AG04449 (cell line): ENCODE measurements at regions of chr12 and their contacts with region 1.

Region 1: DNA sequence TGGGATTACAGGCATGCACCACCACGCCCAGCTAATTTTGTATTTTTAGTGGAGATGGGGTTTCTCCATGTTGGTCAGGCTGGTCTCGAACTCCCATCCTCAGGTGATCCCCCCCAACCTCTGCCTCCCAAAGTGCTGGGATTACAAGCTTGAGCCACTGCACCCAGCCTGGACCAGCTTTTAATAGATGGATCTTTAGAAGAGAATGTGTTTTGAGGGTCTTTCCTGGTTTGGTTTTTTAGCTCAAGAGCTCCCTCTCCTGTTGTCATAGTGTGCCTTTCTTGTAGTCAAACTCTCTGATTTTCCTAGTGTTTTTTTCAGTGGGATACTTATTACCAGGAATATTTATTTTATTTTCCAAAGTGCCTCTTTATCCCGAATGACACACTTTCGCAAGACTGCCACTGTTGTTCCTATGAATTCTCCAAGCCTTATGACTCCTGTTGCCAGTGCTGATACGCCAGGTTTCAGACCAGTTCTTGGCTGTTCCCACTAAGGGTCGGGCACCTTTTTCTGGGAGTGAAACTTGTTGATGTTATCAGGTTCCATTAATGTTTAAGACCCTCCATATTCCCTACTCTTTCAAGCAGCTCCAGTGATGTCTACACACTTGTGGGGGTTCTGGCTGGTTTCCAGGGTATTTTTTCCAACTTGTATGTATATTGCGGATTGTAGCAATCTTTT is 31.5 kb upstream of the LIMA1 start:
- DNase-seq: no peak
- H3K4me3 ChIP-seq: no peak overlapping the region
- CTCF ChIP-seq: peak; percentile 49

Region 2: GRCh38 chr12:50111693-50112455 is 202.9 kb before region 1 on chr12 and contains the start of gene COX14:
- CTCF ChIA-PET with region 1: interaction called, 22 read pairs
- POLR2A ChIA-PET with region 1: no interaction called
- DNase-seq: peak; percentile 97
- H3K4me3 ChIP-seq: peak within 1 kb of the TSS; percentile 98
- CTCF ChIP-seq: peak; percentile 96

Region 3: GRCh38 chr12:50174971-50175715 is 139.6 kb before region 1 on chr12:
- CTCF ChIA-PET with region 1: interaction called, 50 read pairs
- POLR2A ChIA-PET with region 1: no interaction called
- DNase-seq: no peak
- H3K4me3 ChIP-seq: no peak overlapping the region
- CTCF ChIP-seq: peak; percentile 2

Region 4: DNA sequence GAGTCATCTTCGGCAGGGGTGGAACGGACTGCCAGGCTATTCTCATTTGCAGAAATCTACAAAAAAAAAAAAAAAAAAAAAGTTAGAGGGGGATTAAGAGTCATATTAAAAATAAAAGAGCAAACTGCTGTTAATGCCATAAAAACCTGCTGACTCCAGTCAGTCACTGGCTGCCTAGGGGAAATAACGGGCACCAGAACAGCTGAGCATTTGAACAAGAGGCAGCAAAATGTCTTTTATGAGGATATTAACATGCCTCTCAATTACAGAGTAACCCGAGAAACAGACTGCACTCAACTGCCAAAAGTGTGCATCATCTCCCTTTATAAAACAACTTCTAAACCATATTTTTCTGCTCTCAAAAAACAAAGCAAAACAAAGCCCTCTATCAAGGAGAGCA is 118.9 kb before region 1 on chr12:
- CTCF ChIA-PET with region 1: interaction called, 15 read pairs
- POLR2A ChIA-PET with region 1: no interaction called
- DNase-seq: no peak
- H3K4me3 ChIP-seq: no peak overlapping the region
- CTCF ChIP-seq: no peak

Region 5: GRCh38 chr12:50222275-50222795 is 92.4 kb before region 1 on chr12:
- CTCF ChIA-PET with region 1: interaction called, 31 read pairs
- POLR2A ChIA-PET with region 1: interaction called, 7 read pairs
- DNase-seq: no peak
- H3K4me3 ChIP-seq: peak overlapping the region; percentile 96
- CTCF ChIP-seq: peak; percentile 49

Region 6: DNA sequence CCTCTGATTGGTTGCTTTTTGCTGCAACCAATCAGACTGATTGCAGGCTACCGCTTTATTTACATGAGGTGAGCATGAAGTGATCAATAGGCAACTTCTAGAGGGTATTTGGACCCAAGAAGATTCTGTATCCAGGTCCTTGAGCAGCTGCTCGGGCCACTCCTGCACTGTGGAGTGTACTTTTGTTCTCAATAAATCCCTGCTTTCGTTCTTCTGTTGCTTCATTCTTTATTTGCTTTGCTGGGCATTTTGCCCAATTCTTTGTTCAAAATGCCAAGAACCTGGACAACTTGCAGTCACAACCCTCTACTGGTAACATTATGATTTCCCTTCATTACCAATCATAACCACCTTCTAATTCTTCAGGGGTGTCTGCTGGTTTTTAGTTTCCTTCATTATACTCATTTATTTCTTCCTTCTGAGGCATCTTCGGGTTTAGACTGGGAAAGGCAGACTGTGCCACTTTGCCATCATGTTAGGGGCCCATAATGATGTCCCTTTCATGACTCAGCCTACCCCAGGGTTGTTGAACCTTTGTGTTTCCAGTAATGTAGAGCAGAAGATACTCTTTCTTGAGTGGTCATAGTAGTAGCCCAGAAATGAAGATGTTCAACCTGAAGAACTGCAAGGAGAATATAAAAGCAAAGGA is 12.0 kb after region 1 on chr12:
- CTCF ChIA-PET with region 1: interaction called, 14 read pairs
- POLR2A ChIA-PET with region 1: no interaction called
- DNase-seq: no peak
- H3K4me3 ChIP-seq: no peak overlapping the region
- CTCF ChIP-seq: no peak